ENCODE measurements at regions of chr22 and their contacts with region 1.

Region 1: GRCh38 chr22:42169055-42169469 is 38.5 kb upstream of the CYP2D6 start:
- DNase-seq: peak; percentile 38 to 90
- H3K4me3 ChIP-seq: no peak overlapping the region
- H3K27ac ChIP-seq: no peak overlapping the region; the same call in 1 of the 2 replicates
- H3K4me1 ChIP-seq: peaks cover 0 to 5% (median 1%) of the 10 kb centered on the region in 4 experiments; a peak in 3 of 7 replicates
- H3K27me3 ChIP-seq: no peaks in the 10 kb centered on the region
- CTCF ChIP-seq: peak; percentile 99 to 100 (median 100)
- EP300 ChIP-seq: no peak
- POLR2A ChIP-seq: no peak
- RAD21 ChIP-seq: peak; percentile 99 to 100

Region 2: DNA sequence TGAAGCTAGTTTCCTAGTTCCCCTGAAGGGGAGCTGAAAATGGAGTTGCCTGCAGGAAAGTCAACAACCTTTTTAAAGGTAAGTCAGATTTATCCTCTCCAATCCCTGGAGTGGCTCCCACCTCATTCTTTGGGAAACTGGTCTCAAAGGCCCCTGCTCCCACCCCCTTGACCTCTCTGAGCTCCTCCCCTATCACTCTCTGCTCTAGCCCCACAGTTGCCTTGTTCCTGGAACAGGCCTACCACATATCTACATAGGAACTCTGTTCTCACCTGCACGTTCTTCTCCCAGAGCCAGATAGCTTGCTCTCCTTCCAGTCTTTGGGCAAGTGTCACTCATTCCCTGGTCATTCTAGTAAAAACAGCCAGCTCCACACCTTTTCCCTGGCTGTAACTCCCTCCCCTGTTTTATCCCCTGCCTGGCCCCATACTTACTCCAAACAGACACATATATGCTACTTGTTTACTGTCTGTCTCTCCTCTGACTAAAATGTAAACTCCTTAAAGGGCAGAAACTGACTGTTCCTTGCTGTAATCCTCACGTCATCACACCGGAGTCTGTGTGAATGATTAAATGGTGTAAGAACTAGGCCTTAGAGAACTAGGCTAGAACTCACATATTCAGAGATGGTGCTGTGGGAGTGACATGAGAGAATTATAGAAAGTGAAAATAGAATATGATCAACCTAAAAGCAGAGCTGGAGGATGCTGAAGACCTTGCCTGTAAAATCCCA is 48.1 kb after region 1 on chr22:
- CTCF ChIA-PET with region 1: interaction called, 11 read pairs
- POLR2A ChIA-PET with region 1: no interaction called
- DNase-seq: no peak
- H3K4me3 ChIP-seq: peak overlapping the region in 1 of 4 experiments; percentile 17; a peak in 2 of 8 replicates
- H3K27ac ChIP-seq: peak overlapping the region; percentile 29; the same call in 1 of the 2 replicates
- H3K4me1 ChIP-seq: peaks cover 10 to 22% (median 16%) of the 10 kb centered on the region in 4 experiments; a peak in 6 of 7 replicates
- H3K27me3 ChIP-seq: no peaks in the 10 kb centered on the region
- CTCF ChIP-seq: no peak
- EP300 ChIP-seq: no peak
- POLR2A ChIP-seq: no peak
- RAD21 ChIP-seq: no peak

Region 3: GRCh38 chr22:42283278-42284201 is 114.5 kb after region 1 on chr22:
- CTCF ChIA-PET with region 1: interaction called, 16 read pairs
- POLR2A ChIA-PET with region 1: interaction called, 4 read pairs
- DNase-seq: peak in 1 of 2 experiments; percentile 71
- H3K4me3 ChIP-seq: peak overlapping the region; percentile 4 to 56 (median 38)
- H3K27ac ChIP-seq: no peak overlapping the region
- H3K4me1 ChIP-seq: peaks cover 0 to 17% (median 11%) of the 10 kb centered on the region in 4 experiments; a peak in 6 of 7 replicates
- H3K27me3 ChIP-seq: peaks cover 0 to 55% (median 39%) of the 10 kb centered on the region in 4 experiments; a peak in 6 of 7 replicates
- CTCF ChIP-seq: no peak
- EP300 ChIP-seq: no peak
- POLR2A ChIP-seq: no peak
- RAD21 ChIP-seq: no peak

Region 4: DNA sequence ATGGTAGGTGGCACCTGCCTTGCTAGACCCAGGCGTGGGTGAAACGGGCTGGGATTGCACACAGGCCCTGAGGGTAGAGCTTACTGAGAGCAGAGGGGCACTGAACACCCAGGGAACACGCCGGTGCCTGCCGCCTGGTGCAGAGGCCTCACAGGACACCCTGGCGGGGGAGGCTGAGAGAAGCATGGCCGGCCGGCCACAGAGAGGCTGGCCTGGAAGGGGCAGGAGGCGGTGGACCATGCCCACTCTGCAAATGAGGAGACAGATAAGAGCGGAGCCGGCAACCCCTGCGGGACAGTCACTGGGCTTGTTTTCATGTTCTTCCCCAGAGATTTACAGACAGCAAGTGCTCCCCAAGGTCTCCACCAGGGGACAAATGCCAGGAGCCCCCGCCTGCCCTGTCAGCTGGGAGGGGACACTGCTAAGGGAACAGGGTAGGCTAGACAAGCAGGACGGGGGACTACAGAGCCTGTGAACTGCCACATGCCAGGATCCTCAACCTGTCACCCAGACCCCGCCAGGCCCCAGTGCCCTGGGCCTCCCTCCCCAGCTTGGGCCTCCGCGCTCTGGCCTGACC is 139.9 kb after region 1 on chr22:
- CTCF ChIA-PET with region 1: interaction called, 19 read pairs
- POLR2A ChIA-PET with region 1: no interaction called
- DNase-seq: no peak
- H3K4me3 ChIP-seq: no peak overlapping the region
- H3K27ac ChIP-seq: no peak overlapping the region
- H3K4me1 ChIP-seq: peaks cover 0 to 22% (median 13%) of the 10 kb centered on the region in 4 experiments; a peak in 6 of 7 replicates
- H3K27me3 ChIP-seq: peaks cover 0 to 7% (median 6%) of the 10 kb centered on the region in 4 experiments; a peak in 3 of 7 replicates
- CTCF ChIP-seq: peak; percentile 4 to 25 (median 21); a peak in 2 of 4 replicates
- EP300 ChIP-seq: no peak
- POLR2A ChIP-seq: no peak
- RAD21 ChIP-seq: no peak

Region 5: DNA sequence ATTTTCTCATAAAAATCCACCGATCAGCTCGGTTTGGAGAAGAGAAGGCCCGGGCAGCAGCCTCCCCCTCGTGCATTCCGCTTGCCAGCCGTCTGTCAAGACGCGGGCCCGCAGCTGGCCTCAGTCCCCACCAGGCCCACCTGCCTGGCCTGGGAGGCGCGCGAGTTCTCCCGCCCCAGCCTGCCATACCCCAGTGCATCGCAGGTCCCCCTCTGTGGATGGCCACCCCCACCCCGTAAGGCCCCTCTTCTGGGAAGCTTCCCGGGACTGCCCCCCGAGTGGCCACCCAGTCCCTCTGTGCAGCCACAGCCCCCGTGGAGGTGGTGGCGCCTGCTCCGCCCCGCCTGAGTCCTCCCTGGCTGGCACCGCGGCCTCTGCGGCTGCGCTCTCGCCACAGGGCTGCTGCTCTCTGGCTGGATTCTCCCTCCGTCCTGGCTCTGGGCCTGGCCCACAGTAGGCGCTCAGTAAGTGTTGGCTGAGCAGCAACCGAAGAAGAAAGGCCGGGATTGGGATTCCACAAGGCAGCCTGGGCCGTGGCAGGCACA is 175.4 kb after region 1 on chr22:
- CTCF ChIA-PET with region 1: interaction called, 10 read pairs
- POLR2A ChIA-PET with region 1: no interaction called
- DNase-seq: peak in 1 of 2 experiments; percentile 74
- H3K4me3 ChIP-seq: peak overlapping the region in 3 of 4 experiments; percentile 7 to 55 (median 45); a peak in 3 of 8 replicates
- H3K27ac ChIP-seq: no peak overlapping the region
- H3K4me1 ChIP-seq: peaks cover 0 to 29% (median 17%) of the 10 kb centered on the region in 4 experiments; a peak in 6 of 7 replicates
- H3K27me3 ChIP-seq: peaks cover 0 to 29% (median 18%) of the 10 kb centered on the region in 4 experiments; a peak in 5 of 7 replicates
- CTCF ChIP-seq: no peak
- EP300 ChIP-seq: no peak
- POLR2A ChIP-seq: no peak
- RAD21 ChIP-seq: peak in 1 of 2 experiments; percentile 10; a peak in 1 of 4 replicates